K562 (cell line): ENCODE measurements at regions of chr7 and their contacts with region 1.

Region 1: DNA sequence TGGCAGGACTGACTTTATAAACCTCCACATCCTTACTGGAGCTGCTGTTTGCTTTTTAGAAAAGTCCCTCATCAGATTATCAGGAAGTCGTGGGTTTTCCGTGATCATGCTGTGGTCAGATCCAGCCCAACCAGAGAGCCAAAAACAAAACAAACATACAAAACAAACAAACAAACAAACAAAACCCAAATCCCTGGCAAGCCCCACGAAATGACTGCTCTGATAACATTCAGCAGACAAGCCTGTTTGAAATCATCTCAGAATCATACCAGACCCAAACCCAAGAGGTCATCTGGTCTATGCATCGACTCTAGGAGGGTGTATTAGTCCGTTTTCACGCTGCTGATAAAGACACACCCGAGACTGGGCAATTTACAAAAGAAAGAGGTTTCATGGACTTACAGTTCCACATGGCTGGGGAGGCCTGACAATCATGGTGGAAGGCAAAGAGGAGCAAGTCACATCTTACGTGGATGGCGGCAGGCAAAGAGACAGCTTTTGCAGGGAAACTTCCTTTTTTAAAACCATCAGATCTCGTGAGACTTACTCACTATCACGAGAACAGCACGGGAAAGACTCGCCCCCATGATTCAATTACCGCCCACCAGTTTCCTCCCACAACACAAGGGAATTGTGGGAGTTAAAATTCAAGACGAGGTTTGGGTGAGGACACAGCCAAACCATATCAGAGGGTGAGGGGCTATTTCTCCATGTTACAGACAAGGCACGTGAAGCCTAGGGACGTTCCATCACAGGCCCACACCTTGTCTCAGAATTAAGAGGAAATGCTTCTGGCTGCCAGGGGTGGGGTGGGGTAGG is 85.7 kb downstream of the PARP12 start:
- DNase-seq: peak; percentile 51 to 86 (median 55)
- ATAC-seq: peak; percentile 78
- H3K4me3 ChIP-seq: peak overlapping the region; percentile 46
- H3K27ac ChIP-seq: peak overlapping the region; percentile 54
- H3K4me1 ChIP-seq: peaks cover 8 to 28% of the 10 kb centered on the region in 2 experiments; a peak in 4 of 5 replicates
- H3K27me3 ChIP-seq: no peaks in the 10 kb centered on the region
- CTCF ChIP-seq: peak in 1 of 3 experiments; percentile 21; a peak in 1 of 6 replicates
- EP300 ChIP-seq: peak; percentile 30; the same call in 1 of the 2 replicates
- POLR2A ChIP-seq: peak; percentile 98
- RAD21 ChIP-seq: peak in 1 of 2 experiments; percentile 10; a peak in 1 of 4 replicates

Region 2: GRCh38 chr7:139393621-139394211 is 583.3 kb before region 1 on chr7:
- CTCF ChIA-PET with region 1: no interaction called
- POLR2A ChIA-PET with region 1: no interaction called
- in situ Hi-C with region 1: no loop called
- intact Hi-C with region 1: no loop called
- DNase-seq: no peak
- ATAC-seq: peak; percentile 34
- H3K4me3 ChIP-seq: no peak overlapping the region
- H3K27ac ChIP-seq: no peak overlapping the region
- H3K4me1 ChIP-seq: no peaks in the 10 kb centered on the region
- H3K27me3 ChIP-seq: no peaks in the 10 kb centered on the region
- CTCF ChIP-seq: no peak
- EP300 ChIP-seq: no peak
- POLR2A ChIP-seq: no peak
- RAD21 ChIP-seq: no peak

Region 3: GRCh38 chr7:139915864-139916716 is 61.0 kb before region 1 on chr7:
- CTCF ChIA-PET with region 1: no interaction called
- POLR2A ChIA-PET with region 1: interaction called, 9 read pairs
- in situ Hi-C with region 1: no loop called
- intact Hi-C with region 1: loop called (anchors 2 kb)
- DNase-seq: peak; percentile 93 to 99 (median 95)
- ATAC-seq: peak; percentile 87
- H3K4me3 ChIP-seq: no peak overlapping the region
- H3K27ac ChIP-seq: peak overlapping the region; percentile 85
- H3K4me1 ChIP-seq: peaks cover 28 to 69% of the 10 kb centered on the region in 2 experiments
- H3K27me3 ChIP-seq: no peaks in the 10 kb centered on the region
- CTCF ChIP-seq: no peak
- EP300 ChIP-seq: peak; percentile 92
- POLR2A ChIP-seq: peak; percentile 60
- RAD21 ChIP-seq: peak; percentile 1 to 17; a peak in 2 of 4 replicates

Region 4: DNA sequence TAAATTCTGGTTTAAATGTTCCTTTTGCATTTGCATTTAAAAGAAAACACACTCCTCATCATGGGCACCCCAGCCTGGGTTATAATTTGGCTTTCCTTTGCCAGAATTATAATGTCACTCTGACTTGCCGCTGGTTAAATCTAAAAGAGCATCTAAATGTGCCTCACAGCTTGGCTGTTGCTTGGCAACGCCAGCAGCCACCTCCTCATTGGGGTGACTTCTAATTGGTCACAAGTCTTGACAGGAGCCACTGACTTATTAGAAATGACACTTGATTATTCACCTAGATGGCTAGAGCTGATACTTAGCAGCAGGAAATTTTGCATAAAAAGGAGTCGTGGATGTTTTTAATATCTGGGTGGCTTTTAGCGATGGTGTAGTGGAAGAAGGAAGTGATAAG is 33.6 kb before region 1 on chr7:
- CTCF ChIA-PET with region 1: no interaction called
- POLR2A ChIA-PET with region 1: interaction called, 13 read pairs
- in situ Hi-C with region 1: no loop called
- intact Hi-C with region 1: no loop called
- DNase-seq: no peak
- ATAC-seq: no peak
- H3K4me3 ChIP-seq: no peak overlapping the region
- H3K27ac ChIP-seq: no peak overlapping the region
- H3K4me1 ChIP-seq: peaks cover 0 to under 1% of the 10 kb centered on the region in 2 experiments; a peak in 2 of 5 replicates
- H3K27me3 ChIP-seq: no peaks in the 10 kb centered on the region
- CTCF ChIP-seq: no peak
- EP300 ChIP-seq: no peak
- POLR2A ChIP-seq: no peak
- RAD21 ChIP-seq: no peak

Region 5: GRCh38 chr7:139953229-139953628 is 23.8 kb before region 1 on chr7:
- CTCF ChIA-PET with region 1: no interaction called
- POLR2A ChIA-PET with region 1: interaction called, 10 read pairs
- in situ Hi-C with region 1: no loop called
- intact Hi-C with region 1: no loop called
- DNase-seq: no peak
- ATAC-seq: no peak
- H3K4me3 ChIP-seq: no peak overlapping the region
- H3K27ac ChIP-seq: no peak overlapping the region
- H3K4me1 ChIP-seq: no peaks in the 10 kb centered on the region
- H3K27me3 ChIP-seq: no peaks in the 10 kb centered on the region
- CTCF ChIP-seq: no peak
- EP300 ChIP-seq: no peak
- POLR2A ChIP-seq: no peak
- RAD21 ChIP-seq: no peak

Region 6: GRCh38 chr7:139987691-139988516 is 10.9 kb after region 1 on chr7:
- CTCF ChIA-PET with region 1: no interaction called
- POLR2A ChIA-PET with region 1: interaction called, 26 read pairs
- in situ Hi-C with region 1: no loop called
- intact Hi-C with region 1: no loop called
- DNase-seq: no peak
- ATAC-seq: no peak
- H3K4me3 ChIP-seq: no peak overlapping the region
- H3K27ac ChIP-seq: no peak overlapping the region
- H3K4me1 ChIP-seq: peaks cover 0 to 8% of the 10 kb centered on the region in 2 experiments; a peak in 3 of 5 replicates
- H3K27me3 ChIP-seq: peaks cover 2 to 26% of the 10 kb centered on the region in 2 experiments; a peak in 3 of 5 replicates
- CTCF ChIP-seq: peak; percentile 16 to 42 (median 33); a peak in 2 of 6 replicates
- EP300 ChIP-seq: no peak
- POLR2A ChIP-seq: no peak
- RAD21 ChIP-seq: no peak

Region 7: GRCh38 chr7:140053812-140054539 is 76.9 kb after region 1 on chr7:
- CTCF ChIA-PET with region 1: no interaction called
- POLR2A ChIA-PET with region 1: interaction called, 3 read pairs
- in situ Hi-C with region 1: no loop called
- intact Hi-C with region 1: loop called (anchors 2 kb)
- DNase-seq: peak; percentile 60 to 78 (median 70)
- ATAC-seq: peak; percentile 86
- H3K4me3 ChIP-seq: no peak overlapping the region
- H3K27ac ChIP-seq: no peak overlapping the region
- H3K4me1 ChIP-seq: peaks cover 4 to 12% of the 10 kb centered on the region in 2 experiments; a peak in 3 of 5 replicates
- H3K27me3 ChIP-seq: no peaks in the 10 kb centered on the region
- CTCF ChIP-seq: no peak
- EP300 ChIP-seq: no peak
- POLR2A ChIP-seq: no peak
- RAD21 ChIP-seq: no peak

Region 8: GRCh38 chr7:140096459-140096858 is 119.4 kb after region 1 on chr7:
- CTCF ChIA-PET with region 1: no interaction called
- POLR2A ChIA-PET with region 1: no interaction called
- in situ Hi-C with region 1: no loop called
- intact Hi-C with region 1: no loop called
- DNase-seq: no peak
- ATAC-seq: no peak
- H3K4me3 ChIP-seq: no peak overlapping the region
- H3K27ac ChIP-seq: no peak overlapping the region
- H3K4me1 ChIP-seq: no peaks in the 10 kb centered on the region
- H3K27me3 ChIP-seq: no peaks in the 10 kb centered on the region
- CTCF ChIP-seq: no peak
- EP300 ChIP-seq: no peak
- POLR2A ChIP-seq: no peak
- RAD21 ChIP-seq: no peak